ENCODE measurements at regions of chr9 and their contacts with region 1.

Region 1: DNA sequence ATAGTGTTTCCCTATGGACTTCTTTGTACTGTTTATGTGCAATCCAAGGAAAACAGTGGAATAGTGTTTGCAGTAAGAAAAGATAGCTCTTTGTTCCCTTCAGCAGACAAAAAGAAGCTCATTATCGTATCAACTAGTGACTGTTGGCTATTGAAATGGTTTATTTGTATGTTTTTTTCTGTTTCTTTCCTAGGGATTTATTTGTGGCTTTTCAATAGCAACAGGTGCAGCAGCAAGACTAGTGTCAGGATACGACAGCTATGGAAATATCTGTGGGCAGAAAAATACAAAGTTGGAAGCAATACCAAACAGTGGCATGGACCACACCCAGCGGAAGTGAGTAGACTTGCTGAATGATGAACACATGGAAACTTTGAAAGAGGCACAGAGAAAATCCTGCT is 65.1 kb downstream of the SLC44A1 start:
- DNase-seq: no peak
- H3K4me3 ChIP-seq: no peak overlapping the region
- H3K27ac ChIP-seq: no peak overlapping the region
- H3K4me1 ChIP-seq: no peaks in the 10 kb centered on the region
- H3K27me3 ChIP-seq: no peaks in the 10 kb centered on the region
- CTCF ChIP-seq: no peak

Region 2: GRCh38 chr9:104608336-104608735 is 701.2 kb before region 1 on chr9:
- intact Hi-C with region 1: no loop called
- DNase-seq: no peak
- H3K4me3 ChIP-seq: no peak overlapping the region
- H3K27ac ChIP-seq: no peak overlapping the region
- H3K4me1 ChIP-seq: no peaks in the 10 kb centered on the region
- H3K27me3 ChIP-seq: no peaks in the 10 kb centered on the region
- CTCF ChIP-seq: no peak

Region 3: GRCh38 chr9:105246656-105247173 is 62.8 kb before region 1 on chr9:
- intact Hi-C with region 1: loop called (anchors 2 kb)
- DNase-seq: no peak
- H3K4me3 ChIP-seq: no peak overlapping the region
- H3K27ac ChIP-seq: no peak overlapping the region
- H3K4me1 ChIP-seq: peaks cover 6% of the 10 kb centered on the region
- H3K27me3 ChIP-seq: no peaks in the 10 kb centered on the region
- CTCF ChIP-seq: no peak

Region 4: DNA sequence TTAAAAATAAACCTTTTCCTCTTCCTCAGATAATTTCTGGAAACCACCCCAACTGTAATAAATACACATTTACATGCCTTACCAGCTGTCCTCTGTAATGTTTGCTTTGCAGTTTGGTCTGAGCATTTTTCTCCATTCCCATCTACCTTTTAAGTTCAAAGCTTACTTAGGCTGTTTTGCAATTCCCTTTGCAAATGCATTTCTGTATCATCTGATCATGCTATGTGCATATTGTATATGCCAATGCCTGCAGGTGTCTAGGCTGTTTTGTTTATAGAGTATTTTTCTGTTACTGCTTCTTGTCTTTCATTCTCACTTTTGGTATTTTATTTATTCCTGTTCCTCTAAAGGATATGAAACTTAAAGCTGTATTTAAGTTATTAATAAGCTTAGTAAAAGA is 21.2 kb after region 1 on chr9:
- intact Hi-C with region 1: no loop called
- DNase-seq: no peak
- H3K4me3 ChIP-seq: no peak overlapping the region
- H3K27ac ChIP-seq: peak overlapping the region; percentile 13
- H3K4me1 ChIP-seq: no peaks in the 10 kb centered on the region
- H3K27me3 ChIP-seq: no peaks in the 10 kb centered on the region
- CTCF ChIP-seq: no peak

Region 5: GRCh38 chr9:105355781-105356180 is 46.2 kb after region 1 on chr9:
- intact Hi-C with region 1: no loop called
- DNase-seq: peak; percentile 37
- H3K4me3 ChIP-seq: no peak overlapping the region
- H3K27ac ChIP-seq: no peak overlapping the region
- H3K4me1 ChIP-seq: no peaks in the 10 kb centered on the region
- H3K27me3 ChIP-seq: no peaks in the 10 kb centered on the region
- CTCF ChIP-seq: no peak

Region 6: DNA sequence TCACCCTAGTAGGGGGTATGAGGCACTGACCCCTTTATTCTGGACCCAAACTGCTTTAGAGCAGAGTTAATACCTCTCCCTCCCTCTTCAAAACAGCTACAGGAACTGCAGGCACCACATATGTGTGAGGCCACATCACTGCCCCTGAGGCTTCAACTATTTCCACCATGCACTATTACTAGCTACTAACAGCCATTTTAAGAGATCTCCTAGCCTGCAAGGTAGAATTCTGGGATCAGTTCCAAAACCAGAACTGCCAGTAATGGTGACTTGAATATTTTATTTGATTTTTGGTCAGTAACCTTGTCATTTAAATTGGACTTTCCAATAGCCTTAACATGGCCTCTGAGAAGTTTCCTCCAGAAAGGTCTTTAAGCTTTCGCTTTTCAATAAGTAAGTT is 83.0 kb after region 1 on chr9:
- intact Hi-C with region 1: no loop called
- DNase-seq: no peak
- H3K4me3 ChIP-seq: no peak overlapping the region
- H3K27ac ChIP-seq: no peak overlapping the region
- H3K4me1 ChIP-seq: no peaks in the 10 kb centered on the region
- H3K27me3 ChIP-seq: no peaks in the 10 kb centered on the region
- CTCF ChIP-seq: no peak